ENCODE measurements at regions of chr2 and their contacts with region 1.

Region 1: DNA sequence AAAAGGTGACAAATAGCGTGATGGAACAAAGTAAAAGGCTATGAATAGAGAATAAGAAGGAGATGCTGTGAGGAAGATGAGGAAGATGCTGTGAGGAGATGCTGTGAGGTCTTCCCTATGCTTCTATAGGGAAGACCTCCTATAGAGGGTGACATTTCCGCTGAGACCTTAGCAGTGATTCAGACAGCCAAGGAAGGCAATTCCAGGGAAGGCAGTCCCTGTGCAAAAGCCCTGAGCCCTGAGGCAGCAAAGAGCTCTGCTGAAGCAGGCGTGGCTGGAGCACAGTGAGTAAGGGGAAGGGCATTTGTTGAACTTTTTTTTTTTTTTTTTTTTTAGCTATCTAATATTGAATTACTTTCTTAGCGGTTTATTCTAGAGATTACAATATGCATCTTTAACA is 142.7 kb upstream of the FOSL2 start:
- DNase-seq: no peak
- H3K4me3 Mint-ChIP-seq: no peak overlapping the region
- H3K27ac Mint-ChIP-seq: no peak overlapping the region
- H3K4me1 Mint-ChIP-seq: peaks cover 48% of the 10 kb centered on the region
- H3K27me3 Mint-ChIP-seq: no peaks in the 10 kb centered on the region

Region 2: GRCh38 chr2:27960237-27960912 is 289.6 kb before region 1 on chr2:
- CTCF ChIA-PET with region 1: no interaction called
- POLR2A ChIA-PET with region 1: no interaction called
- intact Hi-C with region 1: loop called (anchors 5 kb)
- DNase-seq: peak; percentile 33
- H3K4me3 Mint-ChIP-seq: peak overlapping the region; percentile 5
- H3K27ac Mint-ChIP-seq: peak overlapping the region; percentile 67
- H3K4me1 Mint-ChIP-seq: peaks cover 75% of the 10 kb centered on the region
- H3K27me3 Mint-ChIP-seq: no peaks in the 10 kb centered on the region